ENCODE measurements at regions of chr2 and their contacts with region 1.

Region 1: DNA sequence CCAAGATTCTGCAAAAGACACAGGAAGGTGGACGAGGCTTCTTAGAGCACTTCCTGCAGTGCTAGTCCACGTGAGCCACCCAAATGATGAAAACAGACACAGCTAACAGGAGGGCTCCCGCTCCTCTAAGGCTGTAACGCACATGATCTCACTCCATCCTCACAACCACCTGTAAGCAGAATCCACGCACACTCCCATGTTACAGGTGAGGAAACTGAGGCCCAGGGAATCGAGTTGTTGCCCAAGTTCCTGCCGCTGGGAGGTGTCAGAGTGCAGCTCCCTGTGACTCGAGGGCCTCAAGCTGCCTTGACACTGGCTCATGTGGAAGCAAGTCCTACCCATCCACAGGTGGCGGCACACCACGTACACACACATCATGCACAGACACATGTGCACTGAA is 4.4 kb downstream of the DNMT3A start:
- DNase-seq: no peak
- H3K4me3 ChIP-seq: no peak overlapping the region
- H3K27ac ChIP-seq: no peak overlapping the region
- H3K4me1 ChIP-seq: peaks cover 0 to 28% (median 24%) of the 10 kb centered on the region in 4 experiments
- H3K27me3 ChIP-seq: no peaks in the 10 kb centered on the region

Region 2: GRCh38 chr2:25314514-25315315 is 22.6 kb before region 1 on chr2:
- CTCF ChIA-PET with region 1: interaction called, 15 read pairs
- POLR2A ChIA-PET with region 1: no interaction called
- DNase-seq: peak in 2 of 3 donors; percentile 33 to 45
- H3K4me3 ChIP-seq: peak overlapping the region in 2 of 7 experiments; percentile 6 to 23
- H3K27ac ChIP-seq: peak overlapping the region in 1 of 2 experiments; percentile 71
- H3K4me1 ChIP-seq: peaks cover 3 to 33% (median 29%) of the 10 kb centered on the region in 4 experiments
- H3K27me3 ChIP-seq: no peaks in the 10 kb centered on the region

Measured in common myeloid progenitor, CD34-positive (primary cell).